ENCODE measurements at regions of chr15 and their contacts with region 1.

Region 1: GRCh38 chr15:38647683-38648082 is 83.1 kb upstream of the RASGRP1 start:
- DNase-seq: no peak
- H3K4me3 ChIP-seq: no peak overlapping the region
- H3K27ac ChIP-seq: no peak overlapping the region
- H3K4me1 ChIP-seq: no peaks in the 10 kb centered on the region
- H3K27me3 ChIP-seq: peaks cover 6% of the 10 kb centered on the region; the same call in 1 of the 2 replicates
- CTCF ChIP-seq: peak; percentile 45
- EP300 ChIP-seq: no peak
- RAD21 ChIP-seq: peak; percentile 37

Region 2: GRCh38 chr15:38367476-38367875 is 280.2 kb before region 1 on chr15:
- CTCF ChIA-PET with region 1: no interaction called
- POLR2A ChIA-PET with region 1: no interaction called
- DNase-seq: no peak
- H3K4me3 ChIP-seq: no peak overlapping the region
- H3K27ac ChIP-seq: no peak overlapping the region
- H3K4me1 ChIP-seq: no peaks in the 10 kb centered on the region
- H3K27me3 ChIP-seq: no peaks in the 10 kb centered on the region
- CTCF ChIP-seq: no peak
- EP300 ChIP-seq: no peak
- RAD21 ChIP-seq: no peak

Region 3: DNA sequence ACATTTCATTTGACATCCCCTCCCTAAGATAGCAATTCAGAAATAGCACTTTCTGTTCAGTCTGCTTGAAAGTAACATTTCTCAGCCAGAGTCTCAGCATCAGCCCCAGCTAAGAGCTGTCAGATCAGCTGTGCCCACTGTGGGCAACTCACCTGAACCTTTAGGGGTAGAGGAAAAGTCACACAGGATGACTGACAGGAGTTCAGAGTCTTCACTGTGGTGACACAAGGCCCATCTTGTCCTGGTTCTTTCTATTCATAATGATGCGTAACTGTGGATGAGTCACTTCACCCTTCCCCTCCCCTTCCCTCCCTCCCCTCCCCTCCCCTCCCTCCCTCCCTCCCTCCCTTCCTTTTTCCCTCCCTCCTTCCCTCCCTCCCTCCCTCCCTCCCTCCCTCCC is 13.1 kb after region 1 on chr15:
- CTCF ChIA-PET with region 1: interaction called, 13 read pairs
- POLR2A ChIA-PET with region 1: no interaction called
- DNase-seq: no peak
- H3K4me3 ChIP-seq: no peak overlapping the region
- H3K27ac ChIP-seq: no peak overlapping the region
- H3K4me1 ChIP-seq: no peaks in the 10 kb centered on the region
- H3K27me3 ChIP-seq: peaks cover 1% of the 10 kb centered on the region
- CTCF ChIP-seq: no peak
- EP300 ChIP-seq: no peak
- RAD21 ChIP-seq: no peak

Region 4: DNA sequence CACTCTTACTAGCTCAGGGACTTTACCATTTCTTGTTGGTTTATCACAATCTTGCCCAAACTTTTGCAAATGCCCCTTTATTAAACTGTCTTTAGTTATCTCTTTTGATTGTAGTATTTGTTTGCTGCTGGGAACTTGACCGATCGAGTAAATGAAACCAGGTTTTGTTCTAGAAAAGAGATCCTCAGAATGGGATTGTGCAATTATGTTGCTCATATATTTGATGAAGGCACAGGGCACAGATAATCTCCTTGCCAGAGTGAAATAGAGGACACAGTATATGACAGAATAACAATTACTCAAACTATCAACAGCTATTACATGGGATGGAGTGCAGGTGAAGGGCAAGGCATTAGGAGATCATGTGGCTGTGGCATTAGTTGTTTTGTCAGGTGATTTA is 133.5 kb after region 1 on chr15:
- CTCF ChIA-PET with region 1: no interaction called
- POLR2A ChIA-PET with region 1: no interaction called
- DNase-seq: no peak
- H3K4me3 ChIP-seq: no peak overlapping the region
- H3K27ac ChIP-seq: no peak overlapping the region
- H3K4me1 ChIP-seq: no peaks in the 10 kb centered on the region
- H3K27me3 ChIP-seq: no peaks in the 10 kb centered on the region
- CTCF ChIP-seq: no peak
- EP300 ChIP-seq: no peak
- RAD21 ChIP-seq: no peak

Measured in SK-N-SH (cell line).